SK-N-SH (cell line): ENCODE measurements at regions of chr20 and their contacts with region 1.

Region 1: DNA sequence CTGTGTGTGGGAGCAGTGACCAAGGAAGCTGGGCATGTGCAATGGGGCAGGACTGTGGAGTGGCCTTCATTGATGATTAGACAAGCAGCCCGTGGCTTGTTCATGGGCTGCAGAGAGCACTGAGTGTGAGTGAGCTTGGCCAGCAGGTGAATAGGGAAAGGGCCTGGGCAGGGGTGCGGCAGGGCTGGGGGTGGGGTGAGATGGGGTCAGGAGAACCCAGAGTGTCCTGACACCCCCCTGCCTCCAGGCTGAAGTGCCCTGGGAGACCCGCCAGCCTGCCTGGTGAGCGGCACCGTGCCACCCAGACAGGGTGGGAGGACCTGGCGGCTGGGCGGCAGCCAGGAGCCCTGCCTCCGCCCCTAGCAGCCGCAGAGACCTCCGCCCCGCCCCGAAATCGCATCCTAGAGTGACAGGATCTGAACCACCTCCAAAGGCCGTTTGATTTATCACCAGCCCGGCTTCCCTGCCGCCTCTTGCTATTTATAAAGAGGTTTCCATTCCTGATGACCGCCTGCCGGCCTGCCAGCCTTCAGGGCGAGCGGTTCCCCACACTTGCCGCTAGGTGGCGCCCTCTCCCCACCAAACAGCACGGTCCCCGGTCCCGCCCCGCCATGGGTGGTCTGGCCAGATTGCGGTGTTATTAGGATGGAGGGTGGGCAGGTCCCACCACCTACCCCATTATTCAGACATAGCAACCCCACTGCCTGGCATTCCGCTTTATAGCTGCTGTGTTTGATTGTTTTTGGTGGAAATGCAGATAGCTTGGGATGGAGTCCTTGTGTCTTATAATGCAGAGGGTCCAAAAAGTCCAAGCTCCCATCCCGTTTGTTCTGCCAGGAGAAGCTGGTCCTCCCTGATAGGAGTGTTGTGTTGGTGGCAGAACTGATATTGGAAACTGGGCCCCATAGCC is 3.5 kb downstream of the MYLK2 start:
- DNase-seq: peak; percentile 94
- H3K4me3 ChIP-seq: peak overlapping the region; percentile 41 to 70
- H3K27ac ChIP-seq: peak overlapping the region in 1 of 2 experiments; percentile 66; a peak in 2 of 4 replicates
- H3K4me1 ChIP-seq: peaks cover 0 to 8% of the 10 kb centered on the region in 2 experiments; a peak in 1 of 4 replicates
- H3K27me3 ChIP-seq: no peaks in the 10 kb centered on the region
- CTCF ChIP-seq: peak; percentile 98
- EP300 ChIP-seq: no peak
- RAD21 ChIP-seq: peak; percentile 96

Region 2: DNA sequence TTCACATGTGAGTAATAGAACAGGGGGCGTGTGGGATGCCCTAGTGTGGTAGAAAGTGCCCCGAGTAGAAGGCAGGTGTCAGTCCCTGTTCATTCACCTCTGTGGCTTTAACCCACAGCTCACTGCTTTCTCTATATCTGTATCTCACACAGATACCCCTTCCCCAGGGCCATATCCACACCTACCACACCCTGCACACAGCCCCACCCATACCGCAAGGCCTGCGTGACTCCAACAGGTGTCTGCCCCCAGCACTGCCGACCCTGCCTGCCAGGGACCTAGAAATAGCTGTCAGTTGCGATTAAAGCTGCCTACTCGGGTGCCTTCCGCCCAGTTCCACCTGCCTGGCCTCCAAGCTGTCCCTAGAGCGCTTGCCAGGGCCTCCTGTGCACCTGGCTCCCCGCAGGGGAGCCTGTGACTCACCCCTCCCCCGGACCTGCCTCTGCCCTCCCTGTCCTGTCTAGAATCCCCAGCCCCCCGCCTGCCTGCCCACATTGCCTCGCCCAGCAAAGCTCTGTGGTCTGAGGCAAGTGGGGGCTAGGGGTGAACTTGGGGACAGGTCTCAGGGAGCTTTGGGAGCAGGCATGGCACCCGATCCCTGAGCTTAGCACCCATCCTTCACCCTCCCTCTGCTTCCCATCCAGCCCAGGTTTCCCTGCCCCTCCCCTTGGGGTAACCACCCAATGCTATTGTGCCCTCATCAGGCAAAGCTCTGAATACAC is 255.9 kb before region 1 on chr20:
- CTCF ChIA-PET with region 1: no interaction called
- POLR2A ChIA-PET with region 1: no interaction called
- DNase-seq: no peak
- H3K4me3 ChIP-seq: no peak overlapping the region
- H3K27ac ChIP-seq: peak overlapping the region; percentile 15 to 99; a peak in 3 of 4 replicates
- H3K4me1 ChIP-seq: peaks cover 38 to 55% of the 10 kb centered on the region in 2 experiments
- H3K27me3 ChIP-seq: no peaks in the 10 kb centered on the region
- CTCF ChIP-seq: no peak
- EP300 ChIP-seq: no peak
- RAD21 ChIP-seq: no peak

Region 3: GRCh38 chr20:31835977-31836852 is 13.5 kb after region 1 on chr20:
- CTCF ChIA-PET with region 1: interaction called, 174 read pairs
- POLR2A ChIA-PET with region 1: no interaction called
- DNase-seq: peak; percentile 57
- H3K4me3 ChIP-seq: no peak overlapping the region
- H3K27ac ChIP-seq: peak overlapping the region; percentile 62 to 88; a peak in 3 of 4 replicates
- H3K4me1 ChIP-seq: peaks cover 37 to 51% of the 10 kb centered on the region in 2 experiments
- H3K27me3 ChIP-seq: no peaks in the 10 kb centered on the region
- CTCF ChIP-seq: no peak
- EP300 ChIP-seq: peak in 1 of 2 experiments; percentile 94; a peak in 3 of 4 replicates
- RAD21 ChIP-seq: no peak

Region 4: DNA sequence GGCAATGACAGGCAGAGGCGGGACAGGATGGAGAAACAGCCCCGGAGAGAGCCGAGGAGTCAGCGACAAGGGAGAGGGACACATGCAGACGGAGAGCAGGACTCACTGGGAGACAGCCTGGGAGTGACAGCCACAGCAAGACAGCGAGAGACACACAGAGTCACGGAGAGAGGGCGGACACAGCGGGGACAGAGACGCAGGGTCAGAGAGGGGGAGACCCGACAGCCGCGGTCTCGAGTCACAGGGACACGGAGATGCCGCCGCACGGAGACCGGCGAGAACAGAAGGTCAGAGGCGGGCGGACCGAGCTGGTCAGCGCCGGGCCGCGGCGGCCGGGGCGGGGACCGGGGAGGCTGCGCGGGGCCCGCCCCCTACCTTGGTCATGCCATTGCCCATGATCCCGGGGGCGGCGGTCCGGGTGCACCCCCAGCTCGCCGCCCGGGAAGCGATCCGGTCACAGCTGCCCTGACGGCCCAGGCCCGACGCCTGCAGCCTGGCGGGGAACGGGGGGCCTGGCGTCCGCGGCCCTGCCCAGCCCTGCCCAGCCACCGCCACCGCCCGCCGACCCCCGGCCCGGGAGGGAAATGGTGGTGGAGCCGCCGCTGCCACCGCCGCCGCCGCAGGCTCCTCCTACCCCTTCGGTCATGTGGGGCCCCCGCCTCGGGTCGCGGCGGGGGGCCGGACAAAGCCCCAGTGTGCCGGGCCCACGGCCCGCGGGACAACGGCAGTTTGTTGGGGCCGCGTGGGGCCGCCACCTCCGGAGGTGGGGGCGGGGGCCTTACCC is 47.5 kb after region 1 on chr20 and contains the starts of genes DUSP15 and TTLL9:
- CTCF ChIA-PET with region 1: interaction called, 16 read pairs
- POLR2A ChIA-PET with region 1: no interaction called
- DNase-seq: peak; percentile 90
- H3K4me3 ChIP-seq: peak within 1 kb of the TSS; percentile 66 to 69
- H3K27ac ChIP-seq: peak within 1 kb of the TSS in 1 of 2 experiments; percentile 62; a peak in 1 of 4 replicates
- H3K4me1 ChIP-seq: peaks cover 0 to 23% of the 10 kb centered on the region in 2 experiments; a peak in 1 of 4 replicates
- H3K27me3 ChIP-seq: no peaks in the 10 kb centered on the region
- CTCF ChIP-seq: no peak
- EP300 ChIP-seq: no peak
- RAD21 ChIP-seq: no peak
- polyA plus RNA-seq, gene DUSP15: 4.3 and 5.4 TPM in 2 replicates
- polyA plus RNA-seq, gene TTLL9: 0.23 and 0.32 TPM in 2 replicates

Region 5: GRCh38 chr20:32018269-32019074 is 195.8 kb after region 1 on chr20:
- CTCF ChIA-PET with region 1: interaction called, 14 read pairs
- POLR2A ChIA-PET with region 1: no interaction called
- DNase-seq: peak; percentile 96
- H3K4me3 ChIP-seq: peak overlapping the region; percentile 46 to 54
- H3K27ac ChIP-seq: no peak overlapping the region
- H3K4me1 ChIP-seq: peaks cover 0 to 13% of the 10 kb centered on the region in 2 experiments; a peak in 1 of 4 replicates
- H3K27me3 ChIP-seq: peaks cover 61% of the 10 kb centered on the region
- CTCF ChIP-seq: no peak
- EP300 ChIP-seq: no peak
- RAD21 ChIP-seq: no peak

Region 6: DNA sequence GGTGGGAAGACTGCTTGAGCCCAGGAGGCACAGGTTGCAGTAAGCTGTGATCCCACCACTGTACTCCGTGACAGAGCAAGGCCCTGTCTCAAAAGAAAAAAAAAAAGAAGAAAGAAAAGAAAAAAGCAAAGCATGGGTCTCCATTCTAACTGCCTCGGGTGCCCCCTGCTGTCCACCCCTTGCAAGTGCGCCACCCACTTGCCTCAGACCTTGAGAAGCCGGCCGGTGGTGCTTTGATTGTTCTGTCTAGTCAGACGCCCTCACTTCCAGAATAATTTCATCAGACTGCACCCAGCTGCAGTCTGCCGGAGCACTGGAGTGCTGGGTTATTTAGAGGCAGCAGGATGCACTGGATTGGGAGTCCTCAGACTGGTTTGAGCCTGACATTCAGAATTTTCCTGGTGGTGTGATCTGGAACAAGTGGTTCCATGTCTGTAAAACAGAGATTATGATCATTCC is 269.2 kb after region 1 on chr20:
- CTCF ChIA-PET with region 1: interaction called, 27 read pairs
- POLR2A ChIA-PET with region 1: no interaction called
- DNase-seq: peak; percentile 82
- H3K4me3 ChIP-seq: peak overlapping the region in 1 of 2 experiments; percentile 50; a peak in 1 of 4 replicates
- H3K27ac ChIP-seq: no peak overlapping the region
- H3K4me1 ChIP-seq: no peaks in the 10 kb centered on the region; a peak in 1 of 4 replicates
- H3K27me3 ChIP-seq: peaks cover 10% of the 10 kb centered on the region; the same call in 1 of the 2 replicates
- CTCF ChIP-seq: peak; percentile 95
- EP300 ChIP-seq: no peak
- RAD21 ChIP-seq: peak; percentile 75